ENCODE measurements at regions of chr1 and their contacts with region 1.

Region 1: GRCh38 chr1:208207388-208208131 is 36.6 kb downstream of the PLXNA2 start:
- DNase-seq: no peak
- ATAC-seq: no peak
- H3K4me3 ChIP-seq: no peak overlapping the region
- H3K27ac ChIP-seq: no peak overlapping the region
- H3K4me1 ChIP-seq: no peaks in the 10 kb centered on the region
- H3K27me3 ChIP-seq: no peaks in the 10 kb centered on the region; a peak in 1 of 4 replicates
- CTCF ChIP-seq: no peak
- EP300 ChIP-seq: no peak
- POLR2A ChIP-seq: no peak
- RAD21 ChIP-seq: no peak

Region 2: DNA sequence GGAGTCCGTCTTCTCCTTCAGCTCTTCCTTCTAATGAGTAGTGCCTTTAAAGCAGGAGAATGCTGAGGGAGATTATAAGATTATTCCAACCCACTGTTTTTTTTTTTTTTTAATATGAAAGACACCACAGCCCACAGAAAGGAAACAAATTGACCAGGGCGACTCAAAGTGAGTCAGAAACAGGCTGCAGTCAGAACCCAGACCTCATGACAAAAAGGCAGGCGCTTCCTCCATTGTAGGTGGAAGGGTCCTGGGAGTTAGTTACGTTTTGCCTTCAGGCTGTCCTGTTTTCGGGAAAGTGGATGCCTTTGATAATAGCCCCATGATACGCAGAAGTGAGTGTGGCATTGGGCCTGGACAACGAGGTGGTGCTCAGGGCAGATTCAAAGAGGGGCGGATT is 15.6 kb after region 1 on chr1:
- CTCF ChIA-PET with region 1: interaction called, 12 read pairs
- POLR2A ChIA-PET with region 1: interaction called, 5 read pairs
- RAD21 ChIA-PET with region 1: no interaction called
- SMC1A ChIA-PET with region 1: interaction called, 11 read pairs
- in situ Hi-C with region 1: no loop called
- intact Hi-C with region 1: no loop called
- DNase-seq: no peak
- ATAC-seq: no peak
- H3K4me3 ChIP-seq: no peak overlapping the region
- H3K27ac ChIP-seq: no peak overlapping the region
- H3K4me1 ChIP-seq: no peaks in the 10 kb centered on the region
- H3K27me3 ChIP-seq: peaks cover 2 to 20% of the 10 kb centered on the region in 2 experiments; a peak in 3 of 4 replicates
- CTCF ChIP-seq: no peak
- EP300 ChIP-seq: no peak
- POLR2A ChIP-seq: no peak
- RAD21 ChIP-seq: no peak

Region 3: DNA sequence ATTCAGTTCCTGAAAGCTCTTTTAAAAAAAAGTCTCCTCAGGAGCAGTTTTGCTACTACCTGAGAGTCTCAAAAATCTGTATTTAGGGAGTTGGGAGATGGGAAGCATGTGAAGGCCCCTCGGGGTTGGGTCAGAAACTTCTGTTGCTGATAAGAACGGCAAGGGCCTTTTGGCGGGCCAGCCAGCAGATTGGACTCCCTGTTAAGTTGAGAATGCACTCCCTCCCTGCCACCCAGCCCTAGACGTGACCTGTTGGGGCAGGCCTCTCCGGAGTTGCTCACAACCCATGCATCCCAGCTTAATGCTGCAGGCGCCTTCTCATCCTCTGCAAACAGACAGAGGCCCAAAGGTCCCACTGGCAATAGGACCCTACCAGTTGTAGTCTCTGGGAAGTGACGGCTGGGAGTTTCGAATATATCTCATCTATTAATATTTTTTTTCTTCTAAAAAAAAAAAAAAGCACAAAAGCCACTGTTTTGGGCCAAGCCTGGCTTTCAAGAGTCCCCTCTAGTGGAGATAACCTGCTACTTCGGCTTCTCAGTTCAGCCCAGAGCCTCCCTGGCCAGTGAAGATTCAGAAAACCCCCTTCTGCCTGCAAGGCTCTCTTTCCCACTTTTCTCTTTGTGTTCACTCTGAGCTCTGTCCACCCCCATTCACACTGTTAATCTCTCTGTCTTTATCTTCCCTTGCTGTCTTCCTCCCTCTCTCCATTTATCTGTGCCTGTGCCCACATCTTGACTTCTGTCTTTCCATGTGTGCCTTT is 31.3 kb after region 1 on chr1:
- CTCF ChIA-PET with region 1: interaction called, 12 read pairs
- POLR2A ChIA-PET with region 1: no interaction called
- RAD21 ChIA-PET with region 1: interaction called, 5 read pairs
- SMC1A ChIA-PET with region 1: interaction called, 7 read pairs
- in situ Hi-C with region 1: no loop called
- intact Hi-C with region 1: no loop called
- DNase-seq: no peak
- ATAC-seq: peak; percentile 78
- H3K4me3 ChIP-seq: no peak overlapping the region
- H3K27ac ChIP-seq: no peak overlapping the region
- H3K4me1 ChIP-seq: peaks cover 17% of the 10 kb centered on the region
- H3K27me3 ChIP-seq: peaks cover 8 to 17% of the 10 kb centered on the region in 2 experiments
- CTCF ChIP-seq: peak; percentile 42 to 71 (median 66)
- EP300 ChIP-seq: no peak
- POLR2A ChIP-seq: no peak
- RAD21 ChIP-seq: peak; percentile 52